Ascending aorta (tissue), 2 donors: ENCODE measurements at regions of chr19 and their contacts with region 1.

Region 1: GRCh38 chr19:36378625-36379509 is at the start of gene ZFP14:
- DNase-seq: peak; percentile 77 to 95
- H3K4me3 ChIP-seq: peak within 1 kb of the TSS; percentile 66 to 92
- H3K27ac ChIP-seq: peak within 1 kb of the TSS; percentile 67 to 89
- H3K4me1 ChIP-seq: peaks cover 3 to 8% of the 10 kb centered on the region in 2 donors
- H3K27me3 ChIP-seq: no peaks in the 10 kb centered on the region
- CTCF ChIP-seq: no peak
- total RNA-seq, gene ZFP14: 1.2 TPM

Region 2: DNA sequence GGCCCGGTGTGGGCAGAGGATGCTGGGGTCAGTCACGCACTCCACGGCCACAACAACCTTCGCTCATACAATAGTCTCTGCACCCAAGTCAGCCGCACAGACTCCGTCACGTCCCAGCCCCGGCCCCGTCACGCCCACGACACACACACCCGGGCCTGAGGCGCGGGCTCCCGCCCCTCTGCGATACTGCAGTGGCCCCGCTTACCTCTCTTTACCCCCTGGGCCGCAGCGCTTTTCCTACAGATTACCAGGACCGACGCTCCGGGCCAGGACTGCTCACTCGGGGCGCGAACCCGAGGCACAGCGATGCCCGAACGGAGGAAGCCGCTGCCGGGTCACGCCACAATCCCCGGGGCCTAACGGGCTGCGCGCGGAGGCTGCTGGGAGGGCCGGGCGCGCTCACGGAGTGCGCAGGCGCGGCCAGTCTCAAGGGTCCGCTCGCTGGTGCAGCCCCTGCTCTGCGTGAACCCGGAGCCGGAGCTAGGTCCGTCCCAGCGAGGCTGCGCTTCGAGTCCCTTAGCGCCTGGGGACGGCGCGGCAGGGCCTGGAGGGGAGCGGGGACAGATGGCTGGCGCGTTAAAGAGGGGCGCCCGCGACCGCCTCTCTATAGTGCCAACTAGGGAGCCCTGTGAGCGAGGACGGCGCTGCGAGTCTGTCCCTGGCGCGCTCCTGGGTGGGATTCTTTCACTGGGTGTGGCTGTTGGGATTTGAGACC is 39.6 kb after region 1 on chr19 and contains the start of gene ZFP82:
- intact Hi-C with region 1: loop called (anchors 2 kb)
- DNase-seq: peak; percentile 12 to 78
- H3K4me3 ChIP-seq: peak within 1 kb of the TSS; percentile 61 to 77
- H3K27ac ChIP-seq: peak within 1 kb of the TSS; percentile 76 to 84
- H3K4me1 ChIP-seq: peaks cover 0 to 7% of the 10 kb centered on the region in 2 donors
- H3K27me3 ChIP-seq: no peaks in the 10 kb centered on the region
- CTCF ChIP-seq: no peak
- total RNA-seq, gene ZFP82: 1.3 TPM